ENCODE measurements at regions of chr18 and their contacts with region 1.

Region 1: GRCh38 chr18:5253910-5254309 is 41.6 kb downstream of the ZBTB14 start:
- DNase-seq: no peak
- ATAC-seq: no peak
- H3K4me3 ChIP-seq: no peak overlapping the region
- H3K4me3 Mint-ChIP-seq: no peak overlapping the region
- H3K27ac ChIP-seq: no peak overlapping the region
- H3K27ac Mint-ChIP-seq: no peak overlapping the region
- H3K4me1 ChIP-seq: no peaks in the 10 kb centered on the region
- H3K4me1 Mint-ChIP-seq: no peaks in the 10 kb centered on the region
- H3K27me3 ChIP-seq: no peaks in the 10 kb centered on the region
- H3K27me3 Mint-ChIP-seq: peaks cover 0 to 35% of the 10 kb centered on the region in 2 donors
- CTCF ChIP-seq: no peak

Region 2: DNA sequence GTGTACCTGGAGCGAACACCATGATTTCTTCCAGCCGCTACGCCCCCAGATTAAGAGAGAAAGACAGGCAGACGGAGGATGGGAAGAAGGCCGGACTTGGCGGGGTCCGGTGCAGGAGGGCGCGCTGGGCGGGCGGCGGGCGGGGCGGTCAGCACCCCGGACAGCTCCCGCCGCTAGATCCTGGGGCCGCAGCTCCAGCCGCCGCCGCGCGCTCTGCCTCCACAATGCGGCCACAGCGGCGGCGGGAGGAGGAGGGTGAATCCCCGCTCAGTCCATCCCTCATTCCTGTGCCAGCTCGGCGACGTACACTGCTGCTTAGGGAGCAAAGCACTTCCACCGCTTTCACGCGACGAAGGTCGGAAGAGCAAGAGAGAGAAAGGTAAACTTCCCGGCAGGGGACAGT is 56.9 kb before region 1 on chr18 and contains the start of gene AKAIN1:
- intact Hi-C with region 1: loop called (anchors 10 kb)
- DNase-seq: peak in 1 of 2 donors; percentile 20
- ATAC-seq: peak in 2 of 3 donors; percentile 36 to 61
- H3K4me3 ChIP-seq: no peak within 1 kb of the TSS
- H3K4me3 Mint-ChIP-seq: no peak within 1 kb of the TSS
- H3K27ac ChIP-seq: no peak within 1 kb of the TSS
- H3K27ac Mint-ChIP-seq: no peak within 1 kb of the TSS
- H3K4me1 ChIP-seq: peaks cover 5% of the 10 kb centered on the region
- H3K4me1 Mint-ChIP-seq: peaks cover 0 to 8% of the 10 kb centered on the region in 2 donors
- H3K27me3 ChIP-seq: peaks cover 41% of the 10 kb centered on the region
- H3K27me3 Mint-ChIP-seq: peaks cover 40 to 57% of the 10 kb centered on the region in 2 donors
- CTCF ChIP-seq: no peak
- total RNA-seq, gene AKAIN1: not detected

Region 3: DNA sequence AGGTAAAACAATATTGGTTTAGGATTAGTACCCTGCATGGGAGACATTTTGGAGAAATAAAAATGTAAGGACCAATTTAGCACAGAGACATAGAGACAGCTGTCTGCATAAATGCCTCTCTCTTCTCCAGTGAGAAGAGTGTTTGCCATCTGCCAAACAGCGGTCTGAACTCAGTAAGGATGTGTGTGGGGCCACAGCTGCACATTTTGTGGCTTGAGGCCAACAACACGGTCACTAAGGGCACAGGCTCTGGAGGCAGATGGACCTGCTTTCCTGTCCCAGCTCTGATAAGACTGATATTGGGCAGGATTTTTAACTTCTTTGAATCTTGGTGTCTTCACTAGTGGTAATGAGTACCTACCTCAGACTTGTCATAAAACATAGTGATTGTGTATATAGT is 31.4 kb after region 1 on chr18:
- intact Hi-C with region 1: no loop called
- DNase-seq: no peak
- ATAC-seq: no peak
- H3K4me3 ChIP-seq: no peak overlapping the region
- H3K4me3 Mint-ChIP-seq: no peak overlapping the region
- H3K27ac ChIP-seq: no peak overlapping the region
- H3K27ac Mint-ChIP-seq: no peak overlapping the region
- H3K4me1 ChIP-seq: no peaks in the 10 kb centered on the region
- H3K4me1 Mint-ChIP-seq: peaks cover 8 to 23% of the 10 kb centered on the region in 2 donors
- H3K27me3 ChIP-seq: no peaks in the 10 kb centered on the region
- H3K27me3 Mint-ChIP-seq: no peaks in the 10 kb centered on the region
- CTCF ChIP-seq: no peak

Region 4: GRCh38 chr18:5393779-5394178 is 139.9 kb after region 1 on chr18:
- intact Hi-C with region 1: no loop called
- DNase-seq: no peak
- ATAC-seq: no peak
- H3K4me3 ChIP-seq: no peak overlapping the region
- H3K4me3 Mint-ChIP-seq: no peak overlapping the region
- H3K27ac ChIP-seq: no peak overlapping the region
- H3K27ac Mint-ChIP-seq: no peak overlapping the region
- H3K4me1 ChIP-seq: no peaks in the 10 kb centered on the region
- H3K4me1 Mint-ChIP-seq: no peaks in the 10 kb centered on the region
- H3K27me3 ChIP-seq: no peaks in the 10 kb centered on the region
- H3K27me3 Mint-ChIP-seq: peaks cover 0 to 3% of the 10 kb centered on the region in 2 donors
- CTCF ChIP-seq: no peak